Mammary epithelial cell (primary cell): ENCODE measurements at regions of chr11 and their contacts with region 1.

Region 1: GRCh38 chr11:96342961-96343711 is at the start of gene MAML2:
- DNase-seq: peak; percentile 92
- H3K4me3 ChIP-seq: peak within 1 kb of the TSS; percentile 58 to 79 (median 77)
- H3K27ac ChIP-seq: peak within 1 kb of the TSS; percentile 79
- H3K4me1 ChIP-seq: peaks cover 39% of the 10 kb centered on the region
- H3K27me3 ChIP-seq: no peaks in the 10 kb centered on the region
- CTCF ChIP-seq: peak; percentile 86 to 96
- total RNA-seq, gene MAML2: 9.5 to 14.2 TPM

Region 2: GRCh38 chr11:95923728-95924413 is 419.3 kb before region 1 on chr11 and contains the start of gene MTMR2:
- CTCF ChIA-PET with region 1: interaction called, 3 read pairs
- dilution Hi-C with region 1: no loop called
- in situ Hi-C with region 1: no loop called
- intact Hi-C with region 1: loop called (anchors 2 kb)
- DNase-seq: peak; percentile 66
- H3K4me3 ChIP-seq: peak within 1 kb of the TSS; percentile 69 to 98 (median 70)
- H3K27ac ChIP-seq: peak within 1 kb of the TSS; percentile 90
- H3K4me1 ChIP-seq: peaks cover 8% of the 10 kb centered on the region
- H3K27me3 ChIP-seq: no peaks in the 10 kb centered on the region
- CTCF ChIP-seq: peak in 1 of 2 donors; percentile 2
- total RNA-seq, gene MTMR2: 47.2 to 50.7 TPM

Region 3: GRCh38 chr11:96091476-96091875 is 251.7 kb before region 1 on chr11:
- CTCF ChIA-PET with region 1: interaction called, 17 read pairs
- dilution Hi-C with region 1: no loop called
- in situ Hi-C with region 1: no loop called
- intact Hi-C with region 1: loop called (anchors 1 kb)
- DNase-seq: no peak
- H3K4me3 ChIP-seq: no peak overlapping the region
- H3K27ac ChIP-seq: no peak overlapping the region
- H3K4me1 ChIP-seq: peaks cover 17% of the 10 kb centered on the region
- H3K27me3 ChIP-seq: no peaks in the 10 kb centered on the region
- CTCF ChIP-seq: peak in 1 of 2 donors; percentile 32

Region 4: DNA sequence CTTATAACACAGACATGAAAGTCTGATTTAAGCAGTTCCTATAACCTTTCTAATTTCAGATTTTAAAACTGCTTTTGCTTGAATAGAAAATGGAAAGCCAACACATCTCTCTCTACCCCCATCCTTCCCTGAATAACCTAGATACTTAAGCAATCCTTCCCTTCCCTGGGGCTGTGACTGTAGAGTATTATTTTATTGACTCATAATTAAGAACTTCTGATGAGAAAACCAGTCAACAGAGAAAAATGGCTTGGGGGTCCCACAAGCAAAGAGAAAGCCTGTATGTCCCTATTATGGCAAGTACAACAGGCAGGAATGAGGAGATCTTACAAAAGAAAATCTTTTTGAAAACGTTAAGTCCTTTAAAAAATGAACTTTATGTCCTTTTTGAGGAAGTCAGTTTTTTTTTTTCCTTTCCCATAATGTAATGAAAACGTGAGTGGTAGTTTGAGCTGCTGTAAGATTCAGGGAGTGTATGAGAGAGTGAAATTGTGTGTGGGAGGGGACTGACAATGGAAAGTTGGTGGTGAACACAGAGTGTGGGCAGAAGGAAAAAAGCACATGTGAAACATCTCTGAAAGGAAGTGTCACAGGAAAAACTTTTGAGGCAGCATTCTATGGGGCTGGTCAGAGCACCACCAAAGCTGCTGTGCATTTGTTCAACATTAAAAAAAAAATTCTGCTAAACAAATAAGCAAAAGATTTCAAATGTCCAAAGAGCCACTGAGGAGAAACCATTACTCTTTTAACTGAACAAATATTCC is 154.7 kb before region 1 on chr11:
- CTCF ChIA-PET with region 1: interaction called, 10 read pairs
- dilution Hi-C with region 1: no loop called
- in situ Hi-C with region 1: no loop called
- intact Hi-C with region 1: loop called (anchors 2 kb)
- DNase-seq: peak; percentile 79
- H3K4me3 ChIP-seq: no peak overlapping the region
- H3K27ac ChIP-seq: peak overlapping the region; percentile 91
- H3K4me1 ChIP-seq: peaks cover 34% of the 10 kb centered on the region
- H3K27me3 ChIP-seq: no peaks in the 10 kb centered on the region
- CTCF ChIP-seq: no peak

Region 5: DNA sequence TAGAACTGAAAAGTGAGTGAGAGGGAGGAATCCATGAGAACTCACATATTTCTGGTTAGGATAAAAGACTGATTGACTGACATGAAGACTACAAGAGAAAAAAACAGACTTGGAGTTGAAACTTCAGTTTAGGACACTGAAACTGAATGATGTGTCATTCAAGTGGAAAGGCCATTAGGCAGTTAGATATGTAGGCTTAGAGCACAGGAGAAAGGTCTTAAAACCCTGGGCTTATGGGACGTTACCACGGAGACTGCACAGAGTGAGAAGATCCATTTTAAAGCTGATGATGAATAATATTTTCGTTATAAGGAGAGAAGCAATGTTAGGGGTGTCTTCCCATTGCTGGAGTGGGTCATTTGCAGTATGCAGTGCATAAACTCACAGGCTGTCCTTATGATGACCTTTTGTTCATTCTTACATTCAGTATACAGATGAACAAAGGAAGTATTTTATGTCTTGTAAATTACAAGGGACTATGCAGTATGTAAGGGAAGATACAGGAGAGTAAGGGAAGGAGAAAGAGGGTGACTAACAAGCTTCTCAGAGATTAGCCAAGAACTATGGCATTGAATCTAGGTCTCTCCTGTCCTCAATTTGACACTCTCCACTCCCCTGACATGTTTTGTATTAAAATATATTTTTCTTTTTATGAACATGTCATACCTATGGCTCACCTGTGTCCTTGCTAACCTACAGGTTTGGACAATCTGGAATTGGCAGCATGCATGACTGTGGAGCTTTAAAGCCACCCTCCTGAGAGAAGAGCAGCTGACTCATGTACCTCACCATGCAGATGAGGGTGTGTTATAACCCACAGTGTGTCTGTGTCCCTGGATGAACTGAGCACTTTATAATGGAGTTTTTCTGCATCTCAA is 63.9 kb before region 1 on chr11:
- CTCF ChIA-PET with region 1: no interaction called
- dilution Hi-C with region 1: no loop called
- in situ Hi-C with region 1: loop called in 1 of 2 experiments (anchors 5 kb)
- intact Hi-C with region 1: no loop called
- DNase-seq: peak; percentile 92
- H3K4me3 ChIP-seq: no peak overlapping the region
- H3K27ac ChIP-seq: peak overlapping the region; percentile 89
- H3K4me1 ChIP-seq: peaks cover 36% of the 10 kb centered on the region
- H3K27me3 ChIP-seq: no peaks in the 10 kb centered on the region
- CTCF ChIP-seq: no peak

Region 6: GRCh38 chr11:96357794-96358193 is 14.7 kb after region 1 on chr11:
- CTCF ChIA-PET with region 1: interaction called, 20 read pairs
- dilution Hi-C with region 1: no loop called
- in situ Hi-C with region 1: no loop called
- intact Hi-C with region 1: no loop called
- DNase-seq: no peak
- H3K4me3 ChIP-seq: no peak overlapping the region
- H3K27ac ChIP-seq: no peak overlapping the region
- H3K4me1 ChIP-seq: no peaks in the 10 kb centered on the region
- H3K27me3 ChIP-seq: no peaks in the 10 kb centered on the region
- CTCF ChIP-seq: no peak

Region 7: DNA sequence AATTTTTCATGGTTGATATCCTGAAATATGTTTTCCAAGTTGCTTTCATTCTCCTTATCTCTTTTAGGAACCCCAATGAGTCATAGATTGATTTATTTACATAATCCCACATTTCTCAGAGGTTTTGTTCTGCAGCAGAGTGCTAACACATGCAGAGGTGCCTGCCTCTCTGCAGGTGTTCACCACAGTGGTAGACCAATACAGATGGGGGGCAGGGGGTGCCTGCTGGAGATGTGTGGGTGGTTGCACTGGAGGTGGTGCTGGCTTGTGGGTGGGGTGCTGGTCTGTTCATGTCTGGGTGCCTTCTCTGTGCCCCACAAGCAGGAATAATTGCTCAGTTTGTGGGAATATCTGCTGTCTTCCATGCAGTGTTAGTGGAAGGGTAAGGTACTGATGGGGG is 177.8 kb after region 1 on chr11:
- CTCF ChIA-PET with region 1: no interaction called
- dilution Hi-C with region 1: no loop called
- in situ Hi-C with region 1: no loop called
- intact Hi-C with region 1: no loop called
- DNase-seq: no peak
- H3K4me3 ChIP-seq: no peak overlapping the region
- H3K27ac ChIP-seq: no peak overlapping the region
- H3K4me1 ChIP-seq: no peaks in the 10 kb centered on the region
- H3K27me3 ChIP-seq: no peaks in the 10 kb centered on the region
- CTCF ChIP-seq: no peak